ENCODE measurements at regions of chr6 and their contacts with region 1.

Region 1: GRCh38 chr6:129730477-129731165 is 20.6 kb upstream of the ARHGAP18 start:
- DNase-seq: peak in 4 of 42 donors; percentile 14 to 25 (median 17)

Region 2: GRCh38 chr6:129606664-129607063 is 124.0 kb before region 1 on chr6:
- intact Hi-C with region 1: loop called (anchors 10 kb)
- DNase-seq: no peak

Measured in head of caudate nucleus (tissue), 42 donors.